Activated CD4-positive, alpha-beta T cell treated with anti-CD3 and anti-CD28 coated beads for 36 hours (primary cell): ENCODE measurements at regions of chr13 and their contacts with region 1.

Region 1: GRCh38 chr13:48492470-48493065 is 40.3 kb downstream of the RCBTB2 start:
- DNase-seq: peak; percentile 77
- ATAC-seq: peak; percentile 80
- H3K4me3 Mint-ChIP-seq: no peak overlapping the region
- H3K27ac Mint-ChIP-seq: no peak overlapping the region
- H3K4me1 Mint-ChIP-seq: peaks cover 18% of the 10 kb centered on the region
- H3K27me3 Mint-ChIP-seq: no peaks in the 10 kb centered on the region

Region 2: DNA sequence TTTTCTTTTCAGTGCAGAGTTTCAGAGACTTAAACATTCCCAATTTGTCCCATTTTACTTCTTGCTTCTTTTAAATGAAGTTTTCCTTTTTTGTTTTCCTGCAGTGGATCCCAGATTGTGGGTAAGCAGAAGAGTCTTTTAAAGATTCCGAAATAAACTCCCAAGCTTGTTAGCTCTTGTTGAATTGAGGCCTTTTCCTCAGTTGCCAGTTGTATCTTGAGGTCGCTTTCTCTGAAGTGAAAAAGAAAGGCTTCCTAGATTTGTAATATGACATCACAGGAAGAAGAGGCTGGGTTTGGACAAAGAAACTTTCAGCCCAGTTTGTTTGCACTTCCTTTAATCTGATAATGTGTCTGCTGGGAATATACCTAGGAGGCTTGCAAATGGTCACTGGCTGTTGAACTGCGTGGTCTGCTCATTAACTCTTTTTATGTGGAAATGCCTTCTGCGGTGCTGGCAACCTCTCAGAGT is 79.7 kb before region 1 on chr13 and contains the start of gene LPAR6:
- CTCF ChIA-PET with region 1: no interaction called
- POLR2A ChIA-PET with region 1: no interaction called
- intact Hi-C with region 1: loop called (anchors 2 to 5 kb)
- DNase-seq: no peak
- ATAC-seq: no peak
- H3K4me3 Mint-ChIP-seq: peak within 1 kb of the TSS; percentile 99
- H3K27ac Mint-ChIP-seq: peak within 1 kb of the TSS; percentile 98
- H3K4me1 Mint-ChIP-seq: peaks cover 39% of the 10 kb centered on the region
- H3K27me3 Mint-ChIP-seq: no peaks in the 10 kb centered on the region
- total RNA-seq, gene LPAR6: 6.8 to 7.9 TPM

Region 3: DNA sequence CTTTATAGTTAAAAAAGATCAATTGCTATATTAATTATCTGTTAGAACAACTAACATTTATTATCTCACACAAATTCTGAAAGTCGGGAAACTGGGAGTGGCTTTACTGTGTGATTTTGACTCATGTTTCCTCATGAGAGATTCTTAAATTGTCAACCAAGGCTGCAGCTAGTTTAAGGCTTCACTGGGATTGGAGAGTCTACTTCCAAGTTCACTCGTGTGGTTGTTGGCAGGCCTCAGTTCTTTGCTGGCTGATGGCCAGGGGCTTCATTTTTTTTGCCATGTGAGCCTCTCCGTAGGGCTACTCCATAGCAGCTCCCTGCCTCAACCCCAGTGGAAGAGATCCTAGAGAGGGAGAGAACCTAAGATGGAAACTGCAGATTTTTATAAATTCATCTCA is 55.2 kb before region 1 on chr13:
- CTCF ChIA-PET with region 1: no interaction called
- POLR2A ChIA-PET with region 1: no interaction called
- intact Hi-C with region 1: loop called in 1 of 2 experiments (anchors 10 kb)
- DNase-seq: no peak
- ATAC-seq: no peak
- H3K4me3 Mint-ChIP-seq: no peak overlapping the region
- H3K27ac Mint-ChIP-seq: no peak overlapping the region
- H3K4me1 Mint-ChIP-seq: peaks cover 25% of the 10 kb centered on the region
- H3K27me3 Mint-ChIP-seq: no peaks in the 10 kb centered on the region

Region 4: GRCh38 chr13:48505597-48506091 is 13.1 kb after region 1 on chr13:
- CTCF ChIA-PET with region 1: interaction called, 7 read pairs
- POLR2A ChIA-PET with region 1: no interaction called
- intact Hi-C with region 1: loop called in 1 of 2 experiments (anchors 1 kb)
- DNase-seq: peak; percentile 64
- ATAC-seq: peak; percentile 71
- H3K4me3 Mint-ChIP-seq: peak overlapping the region; percentile 22
- H3K27ac Mint-ChIP-seq: peak overlapping the region; percentile 85
- H3K4me1 Mint-ChIP-seq: peaks cover 57% of the 10 kb centered on the region
- H3K27me3 Mint-ChIP-seq: no peaks in the 10 kb centered on the region